CD4-positive, alpha-beta memory T cell (primary cell): ENCODE measurements at regions of chr15 and their contacts with region 1.

Region 1: DNA sequence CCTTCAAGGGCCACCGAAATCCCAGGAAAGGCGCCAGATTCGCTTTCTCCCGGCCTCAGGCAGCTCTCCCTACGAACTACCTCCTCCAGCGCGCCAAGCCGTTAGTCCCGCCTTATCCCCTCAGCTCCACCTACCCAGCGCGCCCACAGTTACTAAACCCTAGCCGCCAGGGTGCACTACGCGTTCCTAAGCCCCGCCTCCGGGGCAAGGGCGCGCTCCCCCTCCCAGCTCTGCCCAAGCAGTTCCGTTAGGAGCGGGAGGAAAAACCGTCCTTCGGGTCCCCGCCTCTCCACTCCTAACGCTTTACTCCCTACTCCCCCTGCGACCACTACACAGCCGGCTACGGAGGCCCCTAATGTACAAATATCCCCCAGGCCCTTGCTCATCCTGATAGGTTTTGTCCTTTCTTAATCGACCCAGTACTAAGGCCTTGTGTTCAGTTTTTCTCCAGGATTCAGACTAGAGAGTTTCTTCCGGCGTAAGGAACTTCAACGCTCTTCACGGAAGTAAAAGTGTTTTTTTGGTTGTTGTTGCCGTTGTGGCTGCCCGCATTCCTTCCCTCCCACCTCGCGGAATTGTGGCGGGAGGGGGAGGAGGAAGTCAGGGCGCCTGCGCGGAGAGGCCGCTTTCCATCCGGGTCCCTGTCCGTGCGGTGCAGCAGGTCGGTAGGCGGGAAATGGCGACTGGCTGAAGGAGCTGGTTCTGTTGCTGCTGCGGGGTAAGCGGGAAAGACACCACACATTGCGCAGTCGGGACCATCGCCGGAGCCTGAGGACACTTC is at the start of gene CTDSPL2:
- DNase-seq: peak; percentile 94 to 96 (median 95)
- H3K4me3 ChIP-seq: peak within 1 kb of the TSS; percentile 57 to 96
- H3K4me3 Mint-ChIP-seq: peak within 1 kb of the TSS; percentile 95 to 100 (median 98)
- H3K27ac ChIP-seq: peak within 1 kb of the TSS; percentile 99
- H3K27ac Mint-ChIP-seq: peak within 1 kb of the TSS; percentile 98 to 100 (median 99)
- H3K4me1 ChIP-seq: peaks cover 38% of the 10 kb centered on the region
- H3K4me1 Mint-ChIP-seq: peaks cover 32 to 66% (median 44%) of the 10 kb centered on the region in 4 donors
- H3K27me3 ChIP-seq: no peaks in the 10 kb centered on the region
- H3K27me3 Mint-ChIP-seq: peaks cover 0 to 2% of the 10 kb centered on the region in 2 donors
- total RNA-seq, gene CTDSPL2: 72.0 to 74.4 TPM

Region 2: DNA sequence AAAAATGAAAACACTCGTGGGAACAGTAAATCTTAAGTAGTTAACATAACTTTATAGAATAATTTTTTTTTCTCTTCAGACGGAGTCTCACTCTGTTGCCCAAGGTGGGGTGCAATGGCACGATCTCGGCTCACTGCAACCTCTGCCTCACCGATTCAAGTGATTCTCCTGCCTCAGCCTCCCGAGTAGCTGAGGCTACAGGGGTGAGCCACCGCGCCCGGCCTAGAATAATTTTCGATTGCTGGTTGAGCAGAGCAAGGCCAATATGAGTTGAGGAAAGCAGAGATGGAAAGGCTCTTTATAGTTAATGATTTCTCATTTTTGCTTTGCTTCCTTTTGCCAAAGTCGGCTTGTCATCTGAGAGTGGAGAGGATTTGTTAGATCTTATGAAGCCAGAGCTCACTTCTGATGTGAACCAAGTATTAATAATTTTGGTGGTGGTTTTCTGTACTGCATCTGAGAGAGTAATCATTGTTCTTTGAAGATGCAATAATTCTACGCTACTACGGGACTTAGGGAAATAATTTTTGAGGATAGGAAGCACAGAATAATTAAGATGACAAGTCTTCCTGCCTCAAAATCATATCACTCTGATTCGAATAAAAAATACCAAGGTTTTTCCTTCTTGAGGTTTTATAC is 140.2 kb before region 1 on chr15:
- CTCF ChIA-PET with region 1: interaction called, 12 read pairs
- POLR2A ChIA-PET with region 1: interaction called, 65 read pairs
- intact Hi-C with region 1: loop called (anchors 1 kb)
- DNase-seq: peak in 3 of 5 donors; percentile 13 to 31 (median 15)
- H3K4me3 ChIP-seq: peak overlapping the region; percentile 92 to 99
- H3K4me3 Mint-ChIP-seq: peak overlapping the region; percentile 89 to 99 (median 95)
- H3K27ac ChIP-seq: peak overlapping the region; percentile 82
- H3K27ac Mint-ChIP-seq: peak overlapping the region; percentile 96 to 100 (median 99)
- H3K4me1 ChIP-seq: peaks cover 36% of the 10 kb centered on the region
- H3K4me1 Mint-ChIP-seq: peaks cover 26 to 53% (median 39%) of the 10 kb centered on the region in 4 donors
- H3K27me3 ChIP-seq: no peaks in the 10 kb centered on the region
- H3K27me3 Mint-ChIP-seq: peaks cover 6 to 9% of the 10 kb centered on the region in 2 donors

Region 3: DNA sequence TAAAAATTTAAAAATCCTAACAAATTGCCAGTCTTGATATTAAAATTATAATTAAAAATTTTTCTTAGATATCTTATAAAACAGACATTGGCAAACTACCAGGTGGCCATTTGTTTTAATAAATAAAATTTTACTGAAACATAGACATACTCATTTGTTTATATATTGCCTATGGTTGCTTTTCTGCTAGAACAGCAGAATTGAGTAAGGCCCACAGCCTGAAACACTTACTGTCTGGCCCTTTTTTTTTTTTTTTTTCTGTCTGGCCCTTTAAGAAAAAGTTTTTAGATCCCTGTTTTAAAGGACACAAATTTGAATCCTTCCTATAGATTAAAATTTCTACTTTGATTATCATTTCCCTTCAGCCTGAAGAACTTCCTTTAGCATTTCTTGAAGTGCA is 60.2 kb before region 1 on chr15:
- CTCF ChIA-PET with region 1: no interaction called
- POLR2A ChIA-PET with region 1: no interaction called
- intact Hi-C with region 1: no loop called
- DNase-seq: no peak
- H3K4me3 ChIP-seq: no peak overlapping the region
- H3K4me3 Mint-ChIP-seq: no peak overlapping the region
- H3K27ac ChIP-seq: no peak overlapping the region
- H3K27ac Mint-ChIP-seq: no peak overlapping the region
- H3K4me1 ChIP-seq: no peaks in the 10 kb centered on the region
- H3K4me1 Mint-ChIP-seq: peaks cover 0 to 1% (median 0%) of the 10 kb centered on the region in 4 donors
- H3K27me3 ChIP-seq: no peaks in the 10 kb centered on the region
- H3K27me3 Mint-ChIP-seq: no peaks in the 10 kb centered on the region

Region 4: GRCh38 chr15:44394062-44394461 is 33.1 kb before region 1 on chr15:
- CTCF ChIA-PET with region 1: no interaction called
- POLR2A ChIA-PET with region 1: no interaction called
- intact Hi-C with region 1: no loop called
- DNase-seq: no peak
- H3K4me3 ChIP-seq: no peak overlapping the region
- H3K4me3 Mint-ChIP-seq: no peak overlapping the region
- H3K27ac ChIP-seq: no peak overlapping the region
- H3K27ac Mint-ChIP-seq: no peak overlapping the region
- H3K4me1 ChIP-seq: no peaks in the 10 kb centered on the region
- H3K4me1 Mint-ChIP-seq: peaks cover 0 to 7% (median 5%) of the 10 kb centered on the region in 4 donors
- H3K27me3 ChIP-seq: no peaks in the 10 kb centered on the region
- H3K27me3 Mint-ChIP-seq: no peaks in the 10 kb centered on the region

Region 5: DNA sequence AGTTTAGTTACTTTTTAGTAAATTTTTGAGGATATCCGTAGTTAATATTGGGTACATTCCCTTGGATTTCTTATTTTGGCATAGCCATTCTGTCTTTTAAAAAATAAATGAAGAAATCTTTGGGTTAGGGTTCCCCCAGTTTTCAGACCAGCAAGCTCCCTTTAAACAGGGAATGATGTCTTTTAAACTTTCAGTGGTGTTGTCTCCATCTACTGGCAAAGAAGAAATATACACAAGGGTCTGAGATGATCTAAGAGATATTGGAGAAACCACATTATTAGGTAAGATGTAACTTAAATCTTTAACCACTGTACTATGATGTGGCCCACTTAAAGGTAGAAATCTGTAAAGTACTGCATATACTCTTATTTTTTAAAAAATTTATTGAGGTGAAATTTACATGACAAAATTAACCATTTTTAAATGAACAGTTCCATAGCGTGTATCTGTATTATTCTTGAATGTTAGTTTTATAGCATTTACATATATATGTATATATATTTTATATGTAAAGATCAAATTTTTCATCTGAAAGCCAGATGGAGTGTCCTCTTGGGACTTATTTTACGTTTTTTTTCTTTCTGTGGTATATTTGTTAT is 74.7 kb after region 1 on chr15:
- CTCF ChIA-PET with region 1: interaction called, 15 read pairs
- POLR2A ChIA-PET with region 1: interaction called, 3 read pairs
- intact Hi-C with region 1: loop called (anchors 5 kb)
- DNase-seq: peak in 4 of 5 donors; percentile 16 to 34 (median 26)
- H3K4me3 ChIP-seq: no peak overlapping the region
- H3K4me3 Mint-ChIP-seq: no peak overlapping the region
- H3K27ac ChIP-seq: no peak overlapping the region
- H3K27ac Mint-ChIP-seq: peak overlapping the region in 1 of 7 donors; percentile 36
- H3K4me1 ChIP-seq: no peaks in the 10 kb centered on the region
- H3K4me1 Mint-ChIP-seq: peaks cover 5 to 7% (median 6%) of the 10 kb centered on the region in 4 donors
- H3K27me3 ChIP-seq: no peaks in the 10 kb centered on the region
- H3K27me3 Mint-ChIP-seq: no peaks in the 10 kb centered on the region

Region 6: GRCh38 chr15:44536962-44537734 is 110.0 kb after region 1 on chr15 and contains the start of gene EIF3J:
- CTCF ChIA-PET with region 1: interaction called, 3 read pairs
- POLR2A ChIA-PET with region 1: interaction called, 21 read pairs
- intact Hi-C with region 1: loop called (anchors 1 kb)
- DNase-seq: peak; percentile 94 to 96 (median 96)
- H3K4me3 ChIP-seq: peak within 1 kb of the TSS; percentile 71 to 90
- H3K4me3 Mint-ChIP-seq: peak within 1 kb of the TSS; percentile 83 to 96 (median 92)
- H3K27ac ChIP-seq: peak within 1 kb of the TSS; percentile 91
- H3K27ac Mint-ChIP-seq: peak within 1 kb of the TSS; percentile 88 to 97 (median 96)
- H3K4me1 ChIP-seq: peaks cover 48% of the 10 kb centered on the region
- H3K4me1 Mint-ChIP-seq: peaks cover 36 to 68% (median 48%) of the 10 kb centered on the region in 4 donors
- H3K27me3 ChIP-seq: no peaks in the 10 kb centered on the region
- H3K27me3 Mint-ChIP-seq: no peaks in the 10 kb centered on the region
- total RNA-seq, gene EIF3J: 65.0 to 76.8 TPM

Region 7: GRCh38 chr15:44728576-44729407 is 301.6 kb after region 1 on chr15:
- CTCF ChIA-PET with region 1: no interaction called
- POLR2A ChIA-PET with region 1: interaction called, 7 read pairs
- intact Hi-C with region 1: loop called (anchors 5 kb)
- DNase-seq: peak; percentile 95 to 98 (median 97)
- H3K4me3 ChIP-seq: peak overlapping the region; percentile 74 to 99
- H3K4me3 Mint-ChIP-seq: peak overlapping the region; percentile 96 to 100 (median 99)
- H3K27ac ChIP-seq: peak overlapping the region; percentile 98
- H3K27ac Mint-ChIP-seq: peak overlapping the region; percentile 96 to 100 (median 99)
- H3K4me1 ChIP-seq: peaks cover 79% of the 10 kb centered on the region
- H3K4me1 Mint-ChIP-seq: peaks cover 47 to 91% (median 63%) of the 10 kb centered on the region in 4 donors
- H3K27me3 ChIP-seq: no peaks in the 10 kb centered on the region
- H3K27me3 Mint-ChIP-seq: no peaks in the 10 kb centered on the region

Region 8: DNA sequence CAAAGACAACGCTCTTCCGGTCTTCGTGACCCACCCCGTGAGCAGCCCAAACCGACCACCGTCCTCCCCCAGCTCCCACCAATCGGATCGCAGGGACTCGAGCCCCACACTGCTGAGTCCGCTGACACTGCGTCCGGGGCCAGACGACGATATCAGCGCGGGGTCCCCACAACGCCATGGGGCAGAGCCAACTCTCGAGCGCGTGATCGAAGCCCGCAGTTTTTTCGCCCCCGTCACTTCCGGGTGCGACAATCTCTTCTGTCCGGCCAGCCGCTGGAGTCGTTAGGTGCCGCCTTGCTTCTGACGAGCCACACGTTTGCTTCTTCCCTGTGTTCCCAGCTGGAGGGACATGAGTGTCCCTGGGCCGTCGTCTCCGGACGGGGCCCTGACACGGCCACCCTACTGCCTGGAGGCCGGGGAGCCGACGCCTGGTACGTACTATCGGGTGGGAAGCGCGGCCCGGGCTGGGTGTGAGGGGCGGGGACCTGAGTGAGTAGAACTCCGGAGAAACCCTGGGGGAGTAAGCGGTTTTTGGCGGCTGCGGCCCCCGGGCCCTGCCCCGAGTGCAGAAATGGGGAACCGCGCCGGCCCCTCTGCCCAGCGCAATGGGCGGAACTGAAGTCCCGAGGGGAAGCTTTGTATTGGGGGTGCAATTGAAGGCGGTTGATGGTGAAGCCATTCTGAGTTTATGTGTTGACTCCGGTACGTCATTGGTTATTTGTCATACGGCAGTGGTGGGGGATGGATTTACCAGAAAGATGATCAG is 1160.1 kb after region 1 on chr15 and contains the start of gene BLOC1S6:
- CTCF ChIA-PET with region 1: no interaction called
- POLR2A ChIA-PET with region 1: no interaction called
- intact Hi-C with region 1: loop called (anchors 10 kb)
- DNase-seq: peak; percentile 87 to 91 (median 90)
- H3K4me3 ChIP-seq: peak within 1 kb of the TSS; percentile 89 to 99
- H3K4me3 Mint-ChIP-seq: peak within 1 kb of the TSS; percentile 96 to 100 (median 100)
- H3K27ac ChIP-seq: peak within 1 kb of the TSS; percentile 95
- H3K27ac Mint-ChIP-seq: peak within 1 kb of the TSS; percentile 100
- H3K4me1 ChIP-seq: peaks cover 44% of the 10 kb centered on the region
- H3K4me1 Mint-ChIP-seq: peaks cover 20 to 48% (median 37%) of the 10 kb centered on the region in 4 donors
- H3K27me3 ChIP-seq: no peaks in the 10 kb centered on the region
- H3K27me3 Mint-ChIP-seq: no peaks in the 10 kb centered on the region
- total RNA-seq, gene BLOC1S6: 43.0 to 43.9 TPM